ENCODE measurements at regions of chr11 and their contacts with region 1.

Region 1: DNA sequence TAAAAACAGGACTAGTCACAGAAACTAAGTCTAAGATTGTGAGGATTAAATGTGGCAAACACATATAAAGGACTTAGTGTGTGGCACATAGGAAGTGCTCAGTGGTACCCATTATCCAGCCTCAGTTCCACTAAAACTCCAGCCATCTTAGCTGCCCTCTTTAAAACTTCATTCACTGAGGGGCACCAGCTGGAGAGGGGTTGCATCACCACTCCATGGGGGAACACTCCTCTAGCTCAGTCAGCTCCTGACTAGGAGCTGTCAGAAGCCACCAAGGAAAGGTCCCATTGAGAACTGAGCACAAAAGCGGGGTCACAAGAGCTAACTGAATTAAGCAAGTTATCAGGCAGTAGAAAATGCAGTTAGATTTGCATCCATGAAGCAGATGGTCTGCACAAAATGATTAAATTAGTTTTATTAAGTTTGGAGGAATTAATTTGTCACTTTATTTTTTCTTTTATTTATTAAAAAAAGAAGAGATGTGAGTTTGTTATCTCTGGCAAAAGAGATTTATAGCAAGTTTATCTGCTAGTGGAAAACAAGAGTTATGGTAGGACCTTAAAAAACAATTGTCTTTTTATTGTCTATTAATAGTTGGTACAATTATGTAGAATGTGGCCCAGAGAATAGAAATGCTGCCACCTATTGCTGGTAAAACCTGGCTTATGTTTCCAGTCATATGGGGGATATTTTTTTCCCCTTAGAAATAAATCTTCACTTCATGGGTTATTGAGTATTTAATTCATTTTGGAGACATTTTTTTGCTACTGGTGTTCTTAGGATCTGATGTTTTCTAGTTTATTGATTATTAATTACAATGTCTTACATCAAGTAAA is 95.7 kb downstream of the NAV2 start:
- DNase-seq: no peak
- ATAC-seq: no peak

Region 2: DNA sequence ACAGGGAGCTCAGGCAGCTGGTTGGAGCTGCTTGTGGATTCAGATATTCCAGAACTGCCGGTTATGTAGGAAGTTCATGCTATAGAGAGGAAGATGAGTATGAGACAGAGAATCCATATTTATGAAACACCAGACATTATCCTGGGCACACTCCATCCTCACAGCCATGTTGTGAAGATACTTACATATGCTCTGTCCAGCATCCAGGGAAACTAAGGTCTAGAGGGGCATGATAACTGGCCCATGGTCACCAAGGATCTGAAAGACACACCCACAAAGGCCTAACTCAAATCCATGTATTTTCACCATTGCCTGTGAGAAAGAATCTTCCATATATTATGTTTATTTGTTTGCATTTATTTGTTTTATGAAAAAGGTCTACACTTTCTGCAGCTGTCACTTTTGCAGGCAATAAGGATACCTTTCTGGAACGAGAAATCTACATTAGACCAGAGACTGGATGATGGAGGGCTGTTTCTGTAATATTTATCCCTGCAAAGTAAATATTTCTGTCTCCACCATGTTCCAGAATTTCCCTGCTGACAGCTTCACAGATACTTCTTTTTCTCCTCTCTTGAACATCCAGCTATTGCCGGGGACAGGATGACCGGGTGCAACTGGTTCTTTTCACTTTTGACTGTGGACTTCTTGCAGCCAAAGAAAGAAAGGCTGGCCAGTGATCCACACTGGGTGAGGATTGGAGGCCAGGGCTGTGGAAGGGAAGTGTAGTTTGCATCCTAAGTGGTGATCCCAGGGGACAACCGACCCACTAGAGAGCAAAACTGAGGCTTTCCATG is 241.5 kb before region 1 on chr11:
- intact Hi-C with region 1: loop called in 1 of 2 experiments (anchors 5 kb)
- DNase-seq: no peak
- ATAC-seq: no peak

Region 3: GRCh38 chr11:19864141-19865140 is 56.1 kb after region 1 on chr11:
- intact Hi-C with region 1: no loop called
- DNase-seq: no peak
- ATAC-seq: peak; percentile 41 to 48

Measured in left cardiac atrium (tissue), 4 donors.